Mammary epithelial cell (primary cell): ENCODE measurements at regions of chr17 and their contacts with region 1.

Region 1: DNA sequence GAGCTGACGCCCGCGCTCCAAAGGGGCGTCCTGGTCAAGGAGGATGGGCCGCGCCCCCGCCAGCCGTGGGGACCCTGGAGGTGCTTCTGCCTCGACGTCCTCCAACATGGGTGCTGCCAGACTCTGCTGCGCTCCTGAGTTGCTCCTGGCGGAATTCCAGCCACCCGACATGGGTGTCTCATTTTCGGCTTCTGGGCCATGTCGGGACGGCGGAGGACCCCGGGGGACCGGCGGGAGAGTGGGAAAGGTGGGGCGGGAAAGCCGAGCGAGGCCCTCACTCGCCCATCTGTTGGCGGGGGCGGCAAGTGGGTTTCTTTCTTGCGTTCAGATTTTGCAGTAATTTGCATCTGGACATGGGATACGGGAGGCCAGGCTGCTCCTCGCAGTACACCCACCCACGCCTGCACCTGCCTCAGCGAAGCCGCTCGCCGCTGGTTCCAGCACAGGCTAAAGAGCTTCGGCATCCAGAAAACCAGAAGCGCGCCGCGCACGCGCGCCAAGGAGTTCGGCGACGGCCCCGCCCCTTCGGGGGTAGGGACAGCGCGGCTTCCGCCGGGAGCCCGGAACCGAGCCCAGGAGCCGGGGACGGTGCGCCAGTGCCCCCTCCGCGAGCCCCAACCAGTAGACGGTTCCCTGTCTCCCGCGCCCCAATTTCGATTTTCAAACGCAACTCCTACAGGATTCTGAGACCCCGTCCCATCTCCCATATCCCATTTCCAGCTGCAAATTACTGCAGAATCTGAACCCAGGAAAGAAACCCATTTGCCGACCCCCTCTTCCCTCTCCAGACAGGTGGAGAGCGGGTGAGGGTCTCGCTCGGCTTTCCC is at the start of gene ARMC7:
- DNase-seq: peak; percentile 80
- H3K4me3 ChIP-seq: peak within 1 kb of the TSS; percentile 71 to 85 (median 79)
- H3K27ac ChIP-seq: peak within 1 kb of the TSS; percentile 16
- H3K4me1 ChIP-seq: peaks cover 15% of the 10 kb centered on the region
- H3K27me3 ChIP-seq: no peaks in the 10 kb centered on the region
- CTCF ChIP-seq: no peak
- total RNA-seq, gene ARMC7: 2.8 to 8.3 TPM

Region 2: DNA sequence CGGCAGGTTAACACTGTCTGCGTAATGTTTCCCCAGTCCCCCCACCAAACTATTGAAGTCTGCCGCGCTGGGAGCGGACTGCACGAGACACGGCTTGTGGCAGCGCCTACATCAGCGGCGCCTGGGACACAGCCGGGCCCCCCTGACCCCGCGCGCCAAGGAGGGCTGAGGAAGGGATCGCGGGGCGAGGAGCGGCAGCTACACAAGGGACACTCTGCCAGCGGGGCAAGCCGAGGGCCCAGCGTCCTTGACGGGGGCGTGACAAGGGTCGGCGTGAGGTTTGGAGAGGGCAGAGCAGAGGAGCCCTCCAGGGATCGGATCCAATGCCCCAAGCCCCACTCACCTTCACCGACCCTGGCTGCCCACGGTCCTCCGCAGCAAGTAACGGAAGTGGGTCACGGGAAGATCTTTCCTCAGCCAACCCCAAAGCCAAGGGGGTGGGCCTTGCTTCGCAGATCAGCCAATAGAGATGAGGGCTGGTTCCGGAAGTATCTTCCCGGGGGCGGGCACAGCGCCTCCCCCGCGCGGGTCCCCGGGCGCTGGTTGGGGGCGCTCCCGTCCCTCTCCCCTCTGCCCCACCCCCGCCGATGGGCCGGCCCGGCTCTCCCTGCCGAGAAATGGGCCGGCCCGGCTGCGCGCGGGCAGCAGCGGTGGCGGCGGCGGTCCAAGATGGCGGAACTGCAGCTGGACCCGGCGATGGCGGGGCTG is 62.9 kb before region 1 on chr17 and contains the starts of genes ATP5PD and KCTD2:
- CTCF ChIA-PET with region 1: no interaction called
- dilution Hi-C with region 1: loop called (anchors 5 kb)
- in situ Hi-C with region 1: loop called in 1 of 2 experiments (anchors 10 kb)
- intact Hi-C with region 1: no loop called
- DNase-seq: peak; percentile 96
- H3K4me3 ChIP-seq: peak within 1 kb of the TSS; percentile 98 to 100 (median 100)
- H3K27ac ChIP-seq: peak within 1 kb of the TSS; percentile 88
- H3K4me1 ChIP-seq: peaks cover 9% of the 10 kb centered on the region
- H3K27me3 ChIP-seq: no peaks in the 10 kb centered on the region
- CTCF ChIP-seq: no peak
- total RNA-seq, gene ATP5PD: 142 to 269 TPM
- total RNA-seq, gene KCTD2: 13.7 to 20.5 TPM

Region 3: DNA sequence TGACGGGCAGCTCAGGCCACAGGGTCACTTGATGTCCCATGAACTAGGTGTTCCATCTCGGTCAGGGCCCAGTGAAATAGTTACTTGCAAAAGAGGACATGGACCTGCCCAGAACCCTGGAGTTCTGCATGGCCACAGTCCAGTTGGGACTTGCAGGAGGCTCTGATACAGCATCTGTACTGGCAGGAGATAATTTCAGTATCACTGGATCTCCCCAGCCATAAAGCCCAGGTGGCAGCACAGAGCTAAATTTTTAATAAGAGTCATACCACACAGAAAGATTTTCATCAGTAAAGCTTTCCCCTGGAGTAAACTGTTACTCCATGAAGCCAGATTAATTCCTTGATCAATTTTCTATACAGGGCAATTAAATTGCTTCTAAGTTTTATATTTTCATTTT is 39.8 kb before region 1 on chr17:
- CTCF ChIA-PET with region 1: interaction called, 19 read pairs
- dilution Hi-C with region 1: no loop called
- in situ Hi-C with region 1: no loop called
- intact Hi-C with region 1: loop called (anchors 1 kb)
- DNase-seq: no peak
- H3K4me3 ChIP-seq: no peak overlapping the region
- H3K27ac ChIP-seq: no peak overlapping the region
- H3K4me1 ChIP-seq: peaks cover 3% of the 10 kb centered on the region
- H3K27me3 ChIP-seq: no peaks in the 10 kb centered on the region
- CTCF ChIP-seq: peak; percentile 34 to 63

Region 4: DNA sequence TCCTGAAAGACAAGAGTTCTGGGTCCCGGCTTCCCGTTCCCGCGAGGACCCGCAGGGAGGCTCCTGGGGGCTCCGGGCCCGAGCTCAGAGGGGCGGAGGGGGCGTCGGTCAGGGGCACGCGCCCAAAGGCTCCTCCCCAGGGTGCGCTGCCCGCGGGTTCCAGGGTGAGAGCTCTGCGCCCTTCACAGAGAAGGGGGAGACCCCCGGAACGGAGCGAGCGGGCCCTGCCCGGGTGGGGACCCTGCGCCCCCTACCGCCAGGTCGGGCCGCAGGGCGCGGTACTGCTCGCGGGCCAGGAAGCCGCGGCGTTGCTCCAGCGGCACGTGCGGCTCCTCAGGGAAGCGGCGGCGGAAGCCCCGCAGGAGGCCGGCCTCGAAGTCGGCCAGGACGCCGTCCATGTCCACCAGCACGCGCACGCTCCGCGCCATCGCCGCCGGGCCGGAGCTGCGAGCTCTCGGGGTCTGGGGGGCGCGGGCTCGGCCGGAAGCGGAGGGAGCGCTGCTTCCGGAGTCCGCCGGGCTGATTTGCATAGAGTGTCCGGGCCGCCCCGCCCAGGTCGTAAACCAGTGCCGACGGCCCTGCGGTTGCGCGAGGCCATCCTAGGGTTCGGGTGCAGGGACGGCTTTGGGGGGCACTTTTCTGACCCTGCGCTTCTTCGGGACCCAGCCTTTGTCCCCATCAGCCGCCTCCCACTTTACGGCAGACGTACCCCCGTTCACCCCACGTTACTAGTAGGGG is 21.8 kb after region 1 on chr17 and contains the start of gene NT5C:
- CTCF ChIA-PET with region 1: interaction called, 8 read pairs
- dilution Hi-C with region 1: no loop called
- in situ Hi-C with region 1: no loop called
- intact Hi-C with region 1: loop called (anchors 1 kb)
- DNase-seq: peak; percentile 69
- H3K4me3 ChIP-seq: peak within 1 kb of the TSS; percentile 72 to 97 (median 87)
- H3K27ac ChIP-seq: peak within 1 kb of the TSS; percentile 67
- H3K4me1 ChIP-seq: peaks cover 25% of the 10 kb centered on the region
- H3K27me3 ChIP-seq: no peaks in the 10 kb centered on the region
- CTCF ChIP-seq: peak; percentile 26 to 69
- total RNA-seq, gene NT5C: 45.7 to 65.7 TPM

Region 5: DNA sequence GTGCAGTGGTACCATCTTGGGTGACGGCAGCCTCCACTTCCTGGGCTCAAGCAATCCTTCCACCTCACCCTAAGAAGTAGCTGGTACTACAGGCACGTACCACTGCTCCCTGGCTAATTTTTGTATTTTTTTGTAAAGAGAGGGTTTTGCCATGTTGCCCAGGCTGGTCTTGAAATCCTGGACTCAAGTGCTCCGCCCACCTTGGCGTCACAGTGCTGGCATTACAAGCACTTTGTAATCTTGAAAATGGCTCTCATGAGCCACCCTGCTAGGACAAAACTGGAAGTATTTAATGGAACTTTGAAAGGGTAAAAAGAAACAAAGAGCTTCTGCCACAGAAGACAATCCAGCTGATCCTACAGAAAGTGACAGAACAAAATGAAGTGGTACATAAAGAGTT is 63.9 kb after region 1 on chr17:
- CTCF ChIA-PET with region 1: interaction called, 18 read pairs
- dilution Hi-C with region 1: no loop called
- in situ Hi-C with region 1: loop called (anchors 10 kb)
- intact Hi-C with region 1: loop called (anchors 1 kb)
- DNase-seq: no peak
- H3K4me3 ChIP-seq: no peak overlapping the region
- H3K27ac ChIP-seq: no peak overlapping the region
- H3K4me1 ChIP-seq: no peaks in the 10 kb centered on the region
- H3K27me3 ChIP-seq: no peaks in the 10 kb centered on the region
- CTCF ChIP-seq: no peak

Region 6: DNA sequence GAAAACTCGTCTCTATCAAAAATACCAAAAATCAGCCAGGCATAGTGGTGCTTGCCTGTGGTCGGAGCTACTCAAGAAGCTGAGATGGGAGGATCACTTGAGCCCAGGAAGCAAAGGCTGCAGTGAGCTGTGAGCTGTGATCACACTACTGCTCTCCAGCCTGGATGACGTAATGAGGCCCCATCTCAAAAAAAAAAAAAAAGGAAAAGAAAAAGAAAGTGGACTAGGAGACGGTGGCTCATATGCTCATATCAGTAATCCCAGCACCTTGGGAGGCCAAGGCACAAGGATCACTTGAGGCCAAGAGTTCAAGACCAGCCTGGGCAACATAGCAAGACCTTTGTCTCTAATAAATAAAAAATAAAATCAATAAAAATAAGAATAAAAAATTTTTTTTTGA is 82.0 kb after region 1 on chr17:
- CTCF ChIA-PET with region 1: no interaction called
- dilution Hi-C with region 1: no loop called
- in situ Hi-C with region 1: no loop called
- intact Hi-C with region 1: no loop called
- DNase-seq: no peak
- H3K4me3 ChIP-seq: no peak overlapping the region
- H3K27ac ChIP-seq: no peak overlapping the region
- H3K4me1 ChIP-seq: no peaks in the 10 kb centered on the region
- H3K27me3 ChIP-seq: no peaks in the 10 kb centered on the region
- CTCF ChIP-seq: no peak

Region 7: DNA sequence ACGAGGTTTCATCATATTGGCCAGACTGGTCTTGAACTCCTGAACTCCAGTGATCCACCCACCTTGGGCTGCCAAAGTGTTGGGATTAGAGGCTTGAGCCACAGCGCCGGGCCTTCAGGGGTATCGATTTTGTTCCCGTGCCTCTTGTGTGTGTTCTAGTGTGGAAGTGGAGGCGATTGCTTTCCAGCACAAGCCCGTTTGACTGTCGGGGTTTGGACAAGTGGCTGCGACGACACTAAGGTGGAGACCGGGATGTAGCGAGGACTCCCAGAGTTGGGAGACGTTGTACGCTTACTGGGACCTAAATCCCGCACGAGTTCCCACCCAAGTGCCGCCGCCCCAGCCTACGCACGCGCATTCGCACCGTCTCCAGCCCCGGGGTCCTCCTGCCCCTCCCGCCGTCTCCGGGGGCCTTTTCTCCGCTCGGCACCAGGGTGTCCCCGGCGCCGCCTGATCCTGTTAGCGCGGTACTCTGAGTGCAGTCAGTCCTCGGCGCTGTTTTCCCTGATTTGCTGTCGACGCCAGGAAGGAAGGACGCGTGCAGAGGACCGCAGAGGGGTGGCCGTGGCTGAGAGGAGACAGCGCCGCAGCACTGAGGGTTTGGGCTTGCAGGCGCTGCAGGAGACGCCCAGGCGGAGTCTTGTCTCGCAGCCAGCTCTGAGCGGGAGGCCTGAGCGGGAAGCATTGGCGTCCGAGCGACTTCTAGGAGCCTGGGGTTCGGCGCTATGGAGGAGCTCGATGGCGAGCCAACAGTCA is 95.6 kb after region 1 on chr17 and contains the start of gene NUP85:
- CTCF ChIA-PET with region 1: interaction called, 17 read pairs
- dilution Hi-C with region 1: no loop called
- in situ Hi-C with region 1: no loop called
- intact Hi-C with region 1: loop called (anchors 1 kb)
- DNase-seq: peak; percentile 91
- H3K4me3 ChIP-seq: peak within 1 kb of the TSS; percentile 67 to 98 (median 96)
- H3K27ac ChIP-seq: peak within 1 kb of the TSS; percentile 91
- H3K4me1 ChIP-seq: no peaks in the 10 kb centered on the region
- H3K27me3 ChIP-seq: no peaks in the 10 kb centered on the region
- CTCF ChIP-seq: no peak
- total RNA-seq, gene NUP85: 28.2 to 60.8 TPM

Region 8: GRCh38 chr17:75218131-75218530 is 108.5 kb after region 1 on chr17:
- CTCF ChIA-PET with region 1: no interaction called
- dilution Hi-C with region 1: no loop called
- in situ Hi-C with region 1: no loop called
- intact Hi-C with region 1: no loop called
- DNase-seq: no peak
- H3K4me3 ChIP-seq: no peak overlapping the region
- H3K27ac ChIP-seq: no peak overlapping the region
- H3K4me1 ChIP-seq: no peaks in the 10 kb centered on the region
- H3K27me3 ChIP-seq: no peaks in the 10 kb centered on the region
- CTCF ChIP-seq: no peak

Region 9: GRCh38 chr17:75498726-75499213 is 389.1 kb after region 1 on chr17:
- CTCF ChIA-PET with region 1: no interaction called
- dilution Hi-C with region 1: no loop called
- in situ Hi-C with region 1: no loop called
- intact Hi-C with region 1: no loop called
- DNase-seq: no peak
- H3K4me3 ChIP-seq: no peak overlapping the region
- H3K27ac ChIP-seq: no peak overlapping the region
- H3K4me1 ChIP-seq: no peaks in the 10 kb centered on the region
- H3K27me3 ChIP-seq: no peaks in the 10 kb centered on the region
- CTCF ChIP-seq: no peak